K562 (cell line): ENCODE measurements at regions of chr6 and their contacts with region 1.

Region 1: GRCh38 chr6:131627724-131628682 is at the start of gene MED23:
- DNase-seq: peak; percentile 88 to 96 (median 91)
- ATAC-seq: peak; percentile 96
- H3K4me3 ChIP-seq: peak within 1 kb of the TSS; percentile 73
- H3K27ac ChIP-seq: peak within 1 kb of the TSS; percentile 86
- H3K4me1 ChIP-seq: peaks cover 0 to 13% of the 10 kb centered on the region in 2 experiments; a peak in 3 of 5 replicates
- H3K27me3 ChIP-seq: no peaks in the 10 kb centered on the region
- CTCF ChIP-seq: peak; percentile 99 to 100 (median 100)
- EP300 ChIP-seq: peak; percentile 66
- POLR2A ChIP-seq: peak; percentile 89
- RAD21 ChIP-seq: peak; percentile 77 to 88
- polyA plus RNA-seq, gene MED23: 13.7 to 20.0 TPM

Region 2: DNA sequence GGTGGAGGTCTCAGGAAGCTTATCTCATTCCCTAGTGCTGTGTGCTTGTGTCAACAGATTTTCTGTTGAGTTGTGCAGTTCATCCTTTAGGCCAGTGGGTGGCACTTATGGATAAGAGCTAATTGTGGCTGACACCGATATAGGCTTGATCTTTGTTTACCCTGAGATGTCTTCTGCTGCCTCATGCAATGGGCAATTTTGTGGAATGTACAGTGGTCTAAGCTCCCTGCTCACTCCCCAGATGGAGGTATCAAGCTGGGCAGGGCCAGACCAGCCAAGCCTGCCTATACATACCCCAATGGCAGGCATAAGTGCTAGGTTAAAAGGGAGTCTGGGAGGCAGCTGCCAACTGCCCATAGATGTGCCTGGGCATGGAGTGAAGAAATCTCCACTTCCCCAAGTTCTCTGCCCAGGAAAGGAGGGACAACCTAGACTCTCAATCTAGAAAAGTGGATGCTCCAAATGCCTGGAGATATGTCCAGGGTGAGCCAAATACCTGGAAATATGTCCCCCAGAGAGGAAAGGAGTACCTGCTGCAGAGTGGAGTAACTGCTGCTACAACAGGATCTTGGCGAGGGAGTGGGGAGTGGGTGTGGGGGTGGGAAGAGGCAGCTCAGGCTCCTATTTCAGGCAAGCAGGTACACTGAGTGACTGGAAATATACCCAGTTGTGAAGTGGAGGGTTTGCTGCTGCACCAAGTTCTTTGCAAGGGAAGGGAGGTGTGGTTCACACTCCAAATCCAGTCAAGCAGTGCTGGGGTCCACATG is 108.2 kb before region 1 on chr6:
- CTCF ChIA-PET with region 1: interaction called, 5 read pairs
- POLR2A ChIA-PET with region 1: no interaction called
- in situ Hi-C with region 1: no loop called
- intact Hi-C with region 1: loop called (anchors 1 kb)
- DNase-seq: peak; percentile 23 to 55 (median 35)
- ATAC-seq: peak; percentile 98
- H3K4me3 ChIP-seq: no peak overlapping the region
- H3K27ac ChIP-seq: no peak overlapping the region
- H3K4me1 ChIP-seq: no peaks in the 10 kb centered on the region
- H3K27me3 ChIP-seq: 0 out of 5 replicates have a peak, but pooled peaks cover 0 to 3% of the 10 kb centered on the region in 2 experiments
- CTCF ChIP-seq: peak; percentile 56 to 64 (median 61)
- EP300 ChIP-seq: no peak
- POLR2A ChIP-seq: no peak
- RAD21 ChIP-seq: peak; percentile 23 to 68; a peak in 2 of 4 replicates

Region 3: DNA sequence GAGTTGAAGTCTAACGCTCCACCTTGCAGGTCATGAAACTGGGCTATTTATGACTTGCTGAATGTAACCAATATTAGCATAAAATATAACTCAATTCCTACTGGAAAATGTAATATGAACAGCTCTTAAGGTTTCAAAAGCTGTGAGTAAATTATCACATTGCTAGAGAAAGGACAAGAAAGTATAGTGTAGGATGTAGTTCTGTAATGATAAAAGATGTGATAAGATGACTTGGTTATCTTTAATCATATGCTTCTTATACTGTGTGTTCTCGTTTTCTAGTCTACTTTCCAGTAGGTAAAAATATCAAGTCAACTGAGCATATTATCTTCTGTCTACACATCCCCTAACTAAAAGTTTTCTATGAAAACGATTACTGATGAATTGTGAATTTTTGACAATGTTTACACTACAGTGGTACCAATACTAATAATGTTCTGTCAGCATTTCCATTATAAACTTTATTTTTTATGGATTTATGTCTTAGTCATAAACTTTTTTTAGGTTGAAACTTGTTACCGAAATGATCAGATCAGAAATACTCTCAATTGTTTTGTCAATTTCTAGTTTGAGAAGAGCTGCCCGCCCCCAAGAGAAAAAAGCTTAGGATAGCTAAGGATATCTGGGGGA is 14.6 kb before region 1 on chr6:
- CTCF ChIA-PET with region 1: no interaction called
- POLR2A ChIA-PET with region 1: interaction called, 11 read pairs
- in situ Hi-C with region 1: no loop called
- intact Hi-C with region 1: no loop called
- DNase-seq: no peak
- ATAC-seq: no peak
- H3K4me3 ChIP-seq: no peak overlapping the region
- H3K27ac ChIP-seq: no peak overlapping the region
- H3K4me1 ChIP-seq: no peaks in the 10 kb centered on the region
- H3K27me3 ChIP-seq: no peaks in the 10 kb centered on the region
- CTCF ChIP-seq: no peak
- EP300 ChIP-seq: no peak
- POLR2A ChIP-seq: no peak
- RAD21 ChIP-seq: no peak

Region 4: DNA sequence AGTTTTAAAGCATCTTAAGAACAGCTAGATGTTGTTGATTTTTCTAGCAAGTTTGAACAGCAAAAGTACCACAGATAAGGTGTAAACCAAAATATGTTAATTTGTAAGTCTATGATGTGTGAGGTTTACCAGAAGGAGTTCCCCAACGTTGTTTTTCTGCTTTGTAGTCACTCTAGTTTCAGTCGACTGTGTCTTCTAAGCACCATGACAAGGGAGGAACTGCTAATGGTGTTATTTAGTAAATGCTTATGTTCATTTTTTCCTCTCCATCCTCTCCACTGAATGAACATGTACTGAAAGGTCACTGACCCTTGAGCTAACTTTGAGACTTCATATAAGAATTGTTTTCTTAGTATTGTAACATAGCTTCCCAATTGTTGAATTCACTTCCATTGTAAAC is 12.1 kb after region 1 on chr6:
- CTCF ChIA-PET with region 1: no interaction called
- POLR2A ChIA-PET with region 1: interaction called, 10 read pairs
- in situ Hi-C with region 1: no loop called
- intact Hi-C with region 1: no loop called
- DNase-seq: peak in 1 of 4 experiments; percentile 40
- ATAC-seq: peak; percentile 23
- H3K4me3 ChIP-seq: peak overlapping the region; percentile 5; the same call in 1 of the 2 replicates
- H3K27ac ChIP-seq: peak overlapping the region; percentile 86
- H3K4me1 ChIP-seq: peaks cover 11 to 36% of the 10 kb centered on the region in 2 experiments
- H3K27me3 ChIP-seq: no peaks in the 10 kb centered on the region
- CTCF ChIP-seq: no peak
- EP300 ChIP-seq: no peak
- POLR2A ChIP-seq: no peak
- RAD21 ChIP-seq: no peak

Region 5: GRCh38 chr6:131646249-131646670 is 18.3 kb after region 1 on chr6:
- CTCF ChIA-PET with region 1: interaction called, 4 read pairs
- POLR2A ChIA-PET with region 1: interaction called, 10 read pairs
- in situ Hi-C with region 1: no loop called
- intact Hi-C with region 1: no loop called
- DNase-seq: peak; percentile 72 to 88 (median 76)
- ATAC-seq: peak; percentile 89
- H3K4me3 ChIP-seq: peak overlapping the region; percentile 22
- H3K27ac ChIP-seq: peak overlapping the region; percentile 78
- H3K4me1 ChIP-seq: peaks cover 16 to 56% of the 10 kb centered on the region in 2 experiments
- H3K27me3 ChIP-seq: no peaks in the 10 kb centered on the region
- CTCF ChIP-seq: no peak
- EP300 ChIP-seq: peak; percentile 89
- POLR2A ChIP-seq: peak; percentile 55; the same call in 1 of the 2 replicates
- RAD21 ChIP-seq: no peak